ENCODE measurements at regions of chr19 and their contacts with region 1.

Region 1: DNA sequence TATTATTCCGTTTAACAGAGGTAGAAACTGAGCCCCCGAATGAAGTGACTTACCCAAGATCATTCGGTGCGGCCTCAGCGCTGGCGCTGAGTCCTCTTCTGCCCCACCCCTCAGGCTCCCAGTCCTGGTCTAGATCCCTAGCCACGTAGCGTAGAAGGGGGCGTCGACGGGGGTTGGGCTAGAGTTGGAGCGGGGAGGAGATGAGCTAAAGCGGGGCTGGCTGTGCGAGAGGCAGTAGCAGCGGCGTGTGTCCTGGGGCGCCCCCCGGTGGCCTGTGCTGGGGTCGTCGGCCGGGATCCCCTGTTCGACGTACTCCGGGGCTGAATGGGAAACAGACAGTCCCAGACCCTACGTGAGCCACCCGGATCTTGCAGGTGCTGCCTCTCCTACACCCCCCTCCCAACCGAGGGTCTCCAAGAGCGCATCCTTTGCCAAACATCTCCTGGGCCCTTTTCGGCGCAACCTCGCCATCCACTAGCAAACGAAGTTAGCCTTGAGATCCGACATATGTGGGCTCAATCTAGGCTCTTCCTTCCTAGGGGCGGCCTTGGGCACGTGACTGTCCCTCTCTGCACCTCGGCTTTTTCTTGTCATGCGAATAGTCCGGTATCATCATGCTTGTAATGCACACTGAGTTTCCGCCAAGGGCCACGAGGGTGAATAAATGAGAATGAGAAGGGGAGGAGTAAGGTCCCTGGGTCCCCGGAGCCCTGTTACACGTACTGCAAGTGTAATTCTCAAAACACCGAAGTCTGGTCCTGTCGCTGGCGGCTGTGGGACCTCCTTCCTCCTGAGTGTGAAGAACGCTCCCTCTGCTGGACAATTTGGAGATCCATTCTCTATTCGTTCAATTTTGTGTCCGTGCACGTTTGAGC is 47.7 kb downstream of the CYP4F22 start:
- DNase-seq: peak; percentile 92 to 99 (median 96)
- ATAC-seq: peak; percentile 82
- H3K4me3 ChIP-seq: peak overlapping the region; percentile 41 to 52
- H3K4me3 Mint-ChIP-seq: peak overlapping the region; percentile 83
- H3K27ac ChIP-seq: peak overlapping the region; percentile 64 to 80
- H3K27ac Mint-ChIP-seq: peak overlapping the region; percentile 93
- H3K4me1 ChIP-seq: peaks cover 23% of the 10 kb centered on the region
- H3K4me1 Mint-ChIP-seq: peaks cover 18% of the 10 kb centered on the region
- H3K27me3 ChIP-seq: peaks cover 0 to 4% of the 10 kb centered on the region in 2 experiments
- H3K27me3 Mint-ChIP-seq: no peaks in the 10 kb centered on the region
- CTCF ChIP-seq: peak; percentile 69

Region 2: GRCh38 chr19:15154002-15154612 is 401.9 kb before region 1 on chr19:
- CTCF ChIA-PET with region 1: no interaction called
- POLR2A ChIA-PET with region 1: no interaction called
- intact Hi-C with region 1: loop called in 1 of 2 experiments (anchors 1 kb)
- DNase-seq: peak in 4 of 9 experiments; percentile 27 to 51 (median 36)
- ATAC-seq: peak; percentile 61
- H3K4me3 ChIP-seq: no peak overlapping the region
- H3K4me3 Mint-ChIP-seq: no peak overlapping the region
- H3K27ac ChIP-seq: no peak overlapping the region
- H3K27ac Mint-ChIP-seq: no peak overlapping the region
- H3K4me1 ChIP-seq: no peaks in the 10 kb centered on the region
- H3K4me1 Mint-ChIP-seq: peaks cover 4% of the 10 kb centered on the region
- H3K27me3 ChIP-seq: no peaks in the 10 kb centered on the region
- H3K27me3 Mint-ChIP-seq: peaks cover 15% of the 10 kb centered on the region
- CTCF ChIP-seq: peak; percentile 48

Region 3: GRCh38 chr19:15264061-15264932 is 291.7 kb before region 1 on chr19:
- CTCF ChIA-PET with region 1: interaction called, 4 read pairs
- POLR2A ChIA-PET with region 1: no interaction called
- intact Hi-C with region 1: loop called in 1 of 2 experiments (anchors 1 kb)
- DNase-seq: peak; percentile 46 to 82 (median 72)
- ATAC-seq: peak; percentile 71
- H3K4me3 ChIP-seq: no peak overlapping the region
- H3K4me3 Mint-ChIP-seq: no peak overlapping the region
- H3K27ac ChIP-seq: no peak overlapping the region
- H3K27ac Mint-ChIP-seq: no peak overlapping the region
- H3K4me1 ChIP-seq: no peaks in the 10 kb centered on the region
- H3K4me1 Mint-ChIP-seq: peaks cover 3% of the 10 kb centered on the region
- H3K27me3 ChIP-seq: no peaks in the 10 kb centered on the region
- H3K27me3 Mint-ChIP-seq: no peaks in the 10 kb centered on the region
- CTCF ChIP-seq: peak; percentile 70

Region 4: DNA sequence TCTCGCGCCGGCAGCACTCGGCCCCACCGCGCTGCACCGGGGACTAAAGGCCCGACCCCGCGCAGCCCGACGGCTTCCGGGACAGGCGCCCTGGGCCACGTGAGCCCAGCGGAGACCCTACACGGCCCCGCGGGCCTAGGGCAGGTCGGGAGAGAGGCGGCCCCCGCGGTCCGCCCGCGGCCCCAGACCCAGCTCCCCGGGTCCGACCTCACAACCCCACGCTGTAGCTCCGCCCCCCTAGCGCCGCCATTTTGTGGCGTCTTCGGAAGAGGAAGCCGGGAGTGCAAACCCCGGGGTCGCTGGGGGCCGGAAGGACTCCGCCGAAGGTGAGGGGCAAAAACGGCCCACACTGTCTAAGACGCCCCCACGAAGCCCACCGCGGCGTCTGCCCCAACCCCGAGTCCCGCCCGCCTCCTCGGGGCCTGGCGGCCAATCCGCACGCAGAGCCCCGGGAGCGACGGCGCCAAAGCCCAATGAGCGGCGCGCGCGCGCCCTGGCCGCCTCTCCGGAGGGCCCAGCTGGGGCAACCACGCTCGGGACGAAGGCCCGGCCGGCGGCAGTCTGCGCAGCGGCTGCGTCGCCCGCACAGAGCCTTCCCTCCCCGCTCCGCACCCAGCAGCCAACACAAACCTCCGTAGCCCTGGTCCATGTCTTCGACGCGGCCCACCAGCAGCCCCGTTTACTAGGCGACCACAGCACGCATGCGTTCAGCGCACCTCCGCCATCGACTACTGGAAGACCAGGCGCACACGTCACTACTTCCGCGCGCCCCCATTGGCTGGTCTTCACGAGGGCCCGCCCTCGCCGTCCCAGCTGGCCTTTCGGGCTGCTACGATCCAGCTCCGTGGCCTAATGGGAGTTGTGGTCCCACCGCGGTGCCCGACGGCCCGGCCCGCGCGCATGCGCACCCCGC is 176.7 kb before region 1 on chr19 and contains the start of gene AKAP8:
- CTCF ChIA-PET with region 1: interaction called, 3 read pairs
- POLR2A ChIA-PET with region 1: interaction called, 17 read pairs
- intact Hi-C with region 1: loop called (anchors 1 kb)
- DNase-seq: peak; percentile 95 to 100 (median 98)
- ATAC-seq: peak; percentile 88
- H3K4me3 ChIP-seq: peak within 1 kb of the TSS; percentile 92 to 96
- H3K4me3 Mint-ChIP-seq: peak within 1 kb of the TSS; percentile 94
- H3K27ac ChIP-seq: peak within 1 kb of the TSS; percentile 98 to 99
- H3K27ac Mint-ChIP-seq: peak within 1 kb of the TSS; percentile 98
- H3K4me1 ChIP-seq: peaks cover 36% of the 10 kb centered on the region
- H3K4me1 Mint-ChIP-seq: peaks cover 40% of the 10 kb centered on the region
- H3K27me3 ChIP-seq: no peaks in the 10 kb centered on the region
- H3K27me3 Mint-ChIP-seq: no peaks in the 10 kb centered on the region
- CTCF ChIP-seq: no peak
- total RNA-seq, gene AKAP8: 97.4 to 109 TPM

Region 5: GRCh38 chr19:15449620-15450527 is 106.1 kb before region 1 on chr19 and contains the start of gene WIZ:
- CTCF ChIA-PET with region 1: interaction called, 5 read pairs
- POLR2A ChIA-PET with region 1: interaction called, 4 read pairs
- intact Hi-C with region 1: loop called in 1 of 2 experiments (anchors 1 kb)
- DNase-seq: peak; percentile 75 to 91 (median 86)
- ATAC-seq: peak; percentile 88
- H3K4me3 ChIP-seq: peak within 1 kb of the TSS; percentile 37 to 65
- H3K4me3 Mint-ChIP-seq: peak within 1 kb of the TSS; percentile 84
- H3K27ac ChIP-seq: peak within 1 kb of the TSS; percentile 40 to 83
- H3K27ac Mint-ChIP-seq: peak within 1 kb of the TSS; percentile 93
- H3K4me1 ChIP-seq: peaks cover 21% of the 10 kb centered on the region
- H3K4me1 Mint-ChIP-seq: peaks cover 33% of the 10 kb centered on the region
- H3K27me3 ChIP-seq: no peaks in the 10 kb centered on the region
- H3K27me3 Mint-ChIP-seq: no peaks in the 10 kb centered on the region
- CTCF ChIP-seq: no peak
- total RNA-seq, gene WIZ: 16.4 to 20.1 TPM

Region 6: DNA sequence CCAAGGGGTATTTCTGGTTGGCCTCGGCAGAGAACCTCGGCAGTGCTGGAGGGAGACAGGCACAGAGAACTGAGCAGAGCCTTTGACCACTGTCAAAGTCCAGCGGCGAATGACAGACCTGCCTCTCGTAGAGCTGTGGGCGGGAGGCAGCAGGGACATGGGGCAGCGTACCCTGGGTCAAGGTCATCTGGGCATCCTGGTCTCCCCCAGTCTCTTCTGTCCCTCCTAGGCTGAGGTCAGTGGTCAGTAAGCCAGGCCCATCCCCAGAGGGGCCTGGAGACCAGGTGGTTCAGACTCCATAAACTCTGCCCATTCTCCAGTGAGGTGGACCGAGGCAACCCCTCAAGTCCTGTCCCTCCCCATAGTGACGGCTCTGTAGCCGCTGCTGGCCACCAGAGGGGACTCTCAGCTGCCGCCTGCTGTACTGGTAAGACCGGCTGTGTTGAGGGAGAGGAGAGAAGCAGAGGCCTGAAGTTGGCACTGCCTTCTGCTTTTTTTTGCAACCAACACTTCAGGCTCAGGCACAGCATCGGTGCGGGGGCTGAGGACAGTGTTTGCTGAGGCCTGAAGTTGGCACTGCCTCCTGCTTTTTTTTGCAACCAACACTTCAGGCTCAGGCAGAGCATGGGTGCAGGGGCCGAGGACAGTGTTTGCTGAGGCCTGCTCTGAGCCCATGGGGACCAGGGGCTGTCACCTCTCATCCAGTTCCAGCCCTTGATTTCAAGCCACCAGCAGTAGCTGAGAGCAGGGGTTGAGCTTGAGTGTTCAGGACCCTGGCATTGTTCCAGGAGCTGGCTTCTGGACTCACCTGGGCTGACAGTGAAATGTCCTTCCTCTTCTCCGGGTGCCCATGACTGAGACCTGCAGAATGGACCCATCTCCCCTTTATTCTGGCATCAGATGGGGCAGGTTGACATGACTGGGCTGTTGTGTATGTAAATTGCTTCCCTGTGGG is 76.3 kb before region 1 on chr19 and contains the start of gene PGLYRP2:
- CTCF ChIA-PET with region 1: interaction called, 9 read pairs
- POLR2A ChIA-PET with region 1: interaction called, 7 read pairs
- intact Hi-C with region 1: loop called in 1 of 2 experiments (anchors 1 kb)
- DNase-seq: peak in 3 of 9 experiments; percentile 24 to 34 (median 31)
- ATAC-seq: peak; percentile 57
- H3K4me3 ChIP-seq: no peak within 1 kb of the TSS
- H3K4me3 Mint-ChIP-seq: peak within 1 kb of the TSS; percentile 53
- H3K27ac ChIP-seq: no peak within 1 kb of the TSS
- H3K27ac Mint-ChIP-seq: peak within 1 kb of the TSS; percentile 37
- H3K4me1 ChIP-seq: peaks cover 24% of the 10 kb centered on the region
- H3K4me1 Mint-ChIP-seq: peaks cover 35% of the 10 kb centered on the region
- H3K27me3 ChIP-seq: no peaks in the 10 kb centered on the region
- H3K27me3 Mint-ChIP-seq: no peaks in the 10 kb centered on the region
- CTCF ChIP-seq: no peak
- total RNA-seq, gene PGLYRP2: not detected